ENCODE measurements at regions of chr7 and their contacts with region 1.

Region 1: GRCh38 chr7:155205368-155206317 is 92.0 kb upstream of the INSIG1 start:
- DNase-seq: peak; percentile 50 to 95 (median 80)
- ATAC-seq: peak; percentile 92 to 96 (median 94)
- H3K4me3 ChIP-seq: peak overlapping the region; percentile 63 to 66
- H3K4me3 Mint-ChIP-seq: peak overlapping the region; percentile 68 to 78 (median 77)
- H3K27ac ChIP-seq: peak overlapping the region; percentile 88
- H3K27ac Mint-ChIP-seq: peak overlapping the region; percentile 83 to 90
- H3K4me1 ChIP-seq: peaks cover 9 to 26% of the 10 kb centered on the region in 2 experiments
- H3K4me1 Mint-ChIP-seq: peaks cover 21 to 28% (median 23%) of the 10 kb centered on the region in 3 donors
- H3K27me3 ChIP-seq: peaks cover 0 to 3% of the 10 kb centered on the region in 2 experiments
- H3K27me3 Mint-ChIP-seq: no peaks in the 10 kb centered on the region

Region 2: GRCh38 chr7:153943861-153944260 is 1261.8 kb before region 1 on chr7:
- CTCF ChIA-PET with region 1: no interaction called
- POLR2A ChIA-PET with region 1: no interaction called
- DNase-seq: no peak
- ATAC-seq: no peak
- H3K4me3 ChIP-seq: no peak overlapping the region
- H3K4me3 Mint-ChIP-seq: no peak overlapping the region
- H3K27ac ChIP-seq: no peak overlapping the region
- H3K27ac Mint-ChIP-seq: no peak overlapping the region
- H3K4me1 ChIP-seq: no peaks in the 10 kb centered on the region
- H3K4me1 Mint-ChIP-seq: no peaks in the 10 kb centered on the region
- H3K27me3 ChIP-seq: peaks cover 0 to 2% of the 10 kb centered on the region in 2 experiments
- H3K27me3 Mint-ChIP-seq: no peaks in the 10 kb centered on the region

Region 3: GRCh38 chr7:154512121-154512833 is 693.4 kb before region 1 on chr7:
- CTCF ChIA-PET with region 1: no interaction called
- POLR2A ChIA-PET with region 1: no interaction called
- DNase-seq: no peak
- ATAC-seq: no peak
- H3K4me3 ChIP-seq: no peak overlapping the region
- H3K4me3 Mint-ChIP-seq: no peak overlapping the region
- H3K27ac ChIP-seq: no peak overlapping the region
- H3K27ac Mint-ChIP-seq: no peak overlapping the region
- H3K4me1 ChIP-seq: no peaks in the 10 kb centered on the region
- H3K4me1 Mint-ChIP-seq: no peaks in the 10 kb centered on the region
- H3K27me3 ChIP-seq: no peaks in the 10 kb centered on the region
- H3K27me3 Mint-ChIP-seq: no peaks in the 10 kb centered on the region

Region 4: DNA sequence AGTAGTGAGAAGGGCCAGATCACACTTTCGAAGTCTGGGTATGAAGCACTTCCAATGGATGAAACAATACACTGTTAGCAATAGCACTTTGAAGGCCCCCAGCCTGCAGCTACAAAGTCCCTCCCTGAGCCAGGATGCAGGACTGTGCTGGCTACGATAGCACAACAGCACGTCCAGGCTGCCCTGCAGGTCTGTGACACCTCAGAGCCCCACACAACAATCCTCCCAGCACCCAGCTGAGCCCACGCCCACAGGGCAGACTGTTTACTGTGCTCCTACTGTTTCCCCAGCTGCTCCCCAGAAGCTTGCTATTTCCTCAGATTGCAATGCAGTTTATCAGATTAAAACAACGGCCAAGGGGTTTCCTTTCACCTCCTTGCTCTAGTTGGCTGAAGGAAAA is 64.1 kb before region 1 on chr7:
- CTCF ChIA-PET with region 1: no interaction called
- POLR2A ChIA-PET with region 1: no interaction called
- DNase-seq: no peak
- ATAC-seq: no peak
- H3K4me3 ChIP-seq: no peak overlapping the region
- H3K4me3 Mint-ChIP-seq: no peak overlapping the region
- H3K27ac ChIP-seq: no peak overlapping the region
- H3K27ac Mint-ChIP-seq: no peak overlapping the region
- H3K4me1 ChIP-seq: no peaks in the 10 kb centered on the region
- H3K4me1 Mint-ChIP-seq: no peaks in the 10 kb centered on the region
- H3K27me3 ChIP-seq: peaks cover 2 to 46% of the 10 kb centered on the region in 2 experiments
- H3K27me3 Mint-ChIP-seq: peaks cover 48 to 50% of the 10 kb centered on the region in 2 donors

Region 5: DNA sequence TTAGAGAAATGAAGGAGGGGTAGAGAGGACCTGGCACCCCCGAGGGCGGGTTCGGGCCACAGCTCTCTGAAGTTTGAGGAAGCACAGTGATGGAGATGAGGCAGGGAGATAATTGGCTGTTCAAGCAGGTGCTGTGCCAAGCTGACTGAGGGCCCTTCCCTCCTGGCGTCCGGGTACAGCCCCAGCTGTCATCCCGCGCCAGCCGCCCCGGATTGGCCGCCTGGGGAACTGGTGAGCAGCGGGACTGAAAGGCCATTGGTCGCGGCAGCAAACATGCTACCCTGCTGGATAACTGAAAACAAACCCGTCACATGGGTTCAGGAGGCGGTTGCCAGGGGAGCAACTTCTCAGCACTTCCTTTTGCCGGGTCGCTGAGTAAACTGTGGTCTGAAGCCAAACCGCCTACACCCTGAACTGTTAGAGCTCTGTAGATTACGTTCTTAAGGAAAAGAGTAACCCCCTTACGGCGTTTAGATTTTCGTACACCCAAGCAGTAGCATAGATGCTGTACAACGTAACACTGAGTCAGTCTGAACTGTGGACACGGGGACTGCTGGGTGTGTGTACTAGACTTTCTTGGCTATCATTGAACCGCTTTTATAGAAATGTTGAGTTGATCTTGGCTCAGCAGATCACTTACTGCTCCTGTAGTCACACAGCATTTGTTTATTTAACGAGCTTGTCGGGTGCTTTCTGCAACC is 93.3 kb after region 1 on chr7:
- CTCF ChIA-PET with region 1: interaction called in 1 of 2 experiments, 21 read pairs
- POLR2A ChIA-PET with region 1: interaction called, 3 to 41 read pairs
- DNase-seq: peak; percentile 85 to 99 (median 96)
- ATAC-seq: peak; percentile 70 to 77 (median 72)
- H3K4me3 ChIP-seq: peak overlapping the region; percentile 38 to 62
- H3K4me3 Mint-ChIP-seq: peak overlapping the region; percentile 89 to 91 (median 90)
- H3K27ac ChIP-seq: peak overlapping the region; percentile 89
- H3K27ac Mint-ChIP-seq: peak overlapping the region; percentile 96 to 99
- H3K4me1 ChIP-seq: peaks cover 18 to 38% of the 10 kb centered on the region in 2 experiments
- H3K4me1 Mint-ChIP-seq: peaks cover 40 to 48% (median 40%) of the 10 kb centered on the region in 3 donors
- H3K27me3 ChIP-seq: no peaks in the 10 kb centered on the region
- H3K27me3 Mint-ChIP-seq: no peaks in the 10 kb centered on the region